MCF 10A (cell line): ENCODE measurements at regions of chr14 and their contacts with region 1.

Region 1: GRCh38 chr14:50003213-50004031 is 110.5 kb downstream of the ARF6 start:
- DNase-seq: peak; percentile 72
- H3K4me3 Mint-ChIP-seq: peak overlapping the region; percentile 73
- H3K27ac Mint-ChIP-seq: peak overlapping the region; percentile 95
- H3K4me1 Mint-ChIP-seq: peaks cover 45% of the 10 kb centered on the region
- H3K27me3 Mint-ChIP-seq: no peaks in the 10 kb centered on the region
- CTCF ChIP-seq: no peak

Region 2: DNA sequence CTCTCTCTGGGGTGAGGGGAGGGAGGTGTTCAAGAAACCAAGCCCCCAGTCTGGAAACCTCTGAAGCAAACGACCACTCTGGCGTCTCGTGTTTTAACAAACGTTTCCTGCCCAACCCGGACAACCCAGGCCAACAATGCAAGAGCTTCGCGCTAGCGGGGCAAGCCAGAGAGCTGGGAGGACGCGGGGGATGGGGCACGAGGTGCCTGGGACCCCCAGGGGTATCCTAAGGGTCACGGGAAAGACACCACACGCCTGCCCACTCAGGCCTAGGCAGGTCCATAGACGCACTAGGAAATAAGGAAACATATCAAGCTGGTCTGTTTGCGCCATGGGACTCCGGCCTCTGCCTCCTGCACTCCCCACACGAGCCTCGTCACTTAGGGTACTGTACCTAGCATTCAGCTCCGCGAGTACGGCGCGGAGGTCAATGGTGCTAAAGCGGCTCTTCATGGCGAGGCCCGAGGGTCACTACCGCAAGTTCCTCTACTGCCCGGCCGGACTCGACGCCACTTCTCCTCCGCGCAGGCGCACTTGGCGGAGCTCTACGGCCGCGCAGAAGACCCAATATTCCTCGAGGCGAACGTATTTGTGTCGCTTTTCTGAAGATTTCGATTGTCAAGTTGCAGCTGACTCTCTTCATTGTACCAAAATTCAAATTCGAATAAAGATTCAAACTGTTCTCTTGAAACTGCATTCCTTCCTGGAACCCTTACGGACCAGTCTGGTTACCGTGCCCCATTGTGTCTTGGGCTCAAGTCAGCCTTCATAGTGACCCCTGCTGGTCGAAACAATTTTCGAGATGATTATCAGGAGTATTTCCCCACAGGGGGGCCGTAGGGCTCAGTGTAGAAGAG is 150.9 kb before region 1 on chr14 and contains the start of gene NEMF:
- CTCF ChIA-PET with region 1: interaction called, 7 read pairs
- POLR2A ChIA-PET with region 1: interaction called, 30 read pairs
- intact Hi-C with region 1: loop called (anchors 5 kb)
- DNase-seq: peak; percentile 92
- H3K4me3 Mint-ChIP-seq: peak within 1 kb of the TSS; percentile 99
- H3K27ac Mint-ChIP-seq: peak within 1 kb of the TSS; percentile 99
- H3K4me1 Mint-ChIP-seq: peaks cover 15% of the 10 kb centered on the region
- H3K27me3 Mint-ChIP-seq: no peaks in the 10 kb centered on the region
- CTCF ChIP-seq: peak; percentile 88
- total RNA-seq, gene NEMF: 55.0 and 57.7 TPM in 2 replicates

Region 3: DNA sequence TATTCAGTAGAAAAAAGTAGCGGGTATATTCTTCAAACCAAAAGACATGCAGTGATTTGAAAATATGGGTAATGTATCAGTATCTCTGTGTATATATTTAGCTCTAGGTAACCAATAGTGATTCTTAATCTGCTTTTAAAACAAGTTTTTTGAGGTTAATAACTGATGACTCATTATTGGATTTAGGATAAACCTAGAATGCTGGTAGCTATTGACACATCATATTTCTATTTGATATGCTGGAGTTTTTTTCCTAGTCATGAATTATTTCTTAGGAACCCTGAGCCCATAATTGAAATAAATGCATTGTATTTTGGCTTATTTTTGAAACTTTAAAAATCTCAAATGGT is 95.0 kb before region 1 on chr14:
- CTCF ChIA-PET with region 1: interaction called, 5 read pairs
- POLR2A ChIA-PET with region 1: interaction called, 12 read pairs
- intact Hi-C with region 1: no loop called
- DNase-seq: no peak
- H3K4me3 Mint-ChIP-seq: peak overlapping the region; percentile 51
- H3K27ac Mint-ChIP-seq: peak overlapping the region; percentile 97
- H3K4me1 Mint-ChIP-seq: peaks cover 25% of the 10 kb centered on the region
- H3K27me3 Mint-ChIP-seq: no peaks in the 10 kb centered on the region
- CTCF ChIP-seq: no peak

Region 4: DNA sequence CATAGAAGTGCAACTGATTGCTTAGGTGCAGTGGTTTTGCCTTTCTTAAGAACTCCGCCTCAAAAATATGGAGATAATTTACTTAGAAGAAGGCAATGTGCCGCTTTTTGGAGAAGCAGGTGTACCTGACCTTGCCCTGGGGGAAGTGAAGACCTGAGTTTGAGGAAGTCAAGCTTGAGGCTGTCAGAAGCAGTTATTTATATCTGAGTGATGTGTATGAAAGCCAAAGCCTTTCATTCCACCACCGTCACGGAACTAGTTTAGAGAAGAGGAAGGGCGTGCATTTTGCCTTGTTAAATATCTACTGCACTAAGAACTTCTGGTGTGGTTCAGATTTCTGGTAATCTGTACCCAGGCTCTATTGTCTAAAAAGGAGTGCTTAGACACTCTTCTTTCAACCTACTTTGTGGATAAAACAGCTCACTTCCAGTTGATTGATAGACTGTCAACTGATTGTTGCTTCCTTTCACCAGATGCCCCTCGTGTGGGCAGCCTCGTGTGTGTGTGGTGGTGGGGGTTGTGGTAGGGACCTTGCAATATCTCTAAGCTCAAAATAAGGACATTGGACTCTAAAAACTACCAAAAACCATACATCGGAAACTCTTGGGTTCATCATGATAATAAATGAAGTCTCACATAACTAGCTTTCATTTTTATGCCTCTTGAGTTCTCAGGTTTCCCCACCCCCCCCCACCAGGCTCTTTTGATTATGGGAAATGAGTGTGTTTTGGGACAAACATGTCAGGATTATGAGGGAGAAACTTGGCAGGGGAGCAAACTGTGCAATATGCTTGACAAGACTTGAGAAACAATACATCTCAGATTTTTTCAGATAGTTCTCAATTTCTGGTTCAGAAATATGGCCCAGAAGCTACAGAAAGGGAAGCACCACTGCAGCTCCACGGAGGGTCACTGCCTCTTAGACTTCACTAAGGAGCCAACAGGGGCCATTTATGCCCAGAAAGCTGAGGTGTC is 32.0 kb before region 1 on chr14:
- CTCF ChIA-PET with region 1: interaction called, 36 read pairs
- POLR2A ChIA-PET with region 1: interaction called, 187 read pairs
- intact Hi-C with region 1: loop called (anchors 1 kb)
- DNase-seq: peak; percentile 80
- H3K4me3 Mint-ChIP-seq: peak overlapping the region; percentile 58
- H3K27ac Mint-ChIP-seq: peak overlapping the region; percentile 89
- H3K4me1 Mint-ChIP-seq: peaks cover 48% of the 10 kb centered on the region
- H3K27me3 Mint-ChIP-seq: no peaks in the 10 kb centered on the region
- CTCF ChIP-seq: no peak

Region 5: DNA sequence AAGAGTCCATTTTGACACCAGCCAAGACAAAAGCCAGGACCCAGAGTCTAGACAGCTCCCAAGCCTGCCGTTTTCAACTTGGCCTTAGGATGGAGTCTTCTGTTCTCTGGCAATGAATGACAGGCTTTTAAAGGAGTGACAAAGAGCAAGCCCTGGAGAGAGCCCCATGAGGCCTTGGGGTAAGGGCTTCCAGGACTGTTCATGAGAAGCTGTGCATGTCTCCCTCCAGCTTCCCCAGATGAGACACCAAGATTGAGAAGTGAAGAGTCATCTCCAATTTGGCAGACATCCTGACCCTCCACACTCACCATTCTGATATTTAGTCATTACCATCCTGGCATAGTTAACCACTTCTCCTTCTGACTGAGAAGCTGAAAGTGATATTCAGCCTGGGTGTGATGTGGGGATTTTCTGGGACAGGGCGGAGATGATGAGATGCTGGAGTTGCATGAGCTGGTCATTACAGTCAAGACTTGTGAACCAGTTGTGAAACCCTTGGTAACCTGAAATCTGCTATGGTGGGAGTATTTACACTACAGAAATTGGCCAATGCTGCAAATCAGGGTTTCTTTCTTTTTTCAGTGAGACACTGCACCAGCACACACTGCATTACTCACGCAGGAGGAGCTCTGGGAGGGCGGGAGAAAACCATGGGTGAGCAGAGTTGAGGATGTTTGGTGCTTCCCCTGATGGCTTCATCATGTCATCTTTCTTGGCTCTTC is 35.1 kb after region 1 on chr14:
- CTCF ChIA-PET with region 1: interaction called, 6 read pairs
- POLR2A ChIA-PET with region 1: interaction called, 95 read pairs
- intact Hi-C with region 1: no loop called
- DNase-seq: peak; percentile 94
- H3K4me3 Mint-ChIP-seq: peak overlapping the region; percentile 40
- H3K27ac Mint-ChIP-seq: peak overlapping the region; percentile 89
- H3K4me1 Mint-ChIP-seq: peaks cover 43% of the 10 kb centered on the region
- H3K27me3 Mint-ChIP-seq: no peaks in the 10 kb centered on the region
- CTCF ChIP-seq: peak; percentile 16

Region 6: GRCh38 chr14:50099335-50099734 is 95.9 kb after region 1 on chr14:
- CTCF ChIA-PET with region 1: interaction called, 5 read pairs
- POLR2A ChIA-PET with region 1: interaction called, 11 read pairs
- intact Hi-C with region 1: loop called (anchors 5 kb)
- DNase-seq: peak; percentile 47
- H3K4me3 Mint-ChIP-seq: no peak overlapping the region
- H3K27ac Mint-ChIP-seq: peak overlapping the region; percentile 33
- H3K4me1 Mint-ChIP-seq: peaks cover 11% of the 10 kb centered on the region
- H3K27me3 Mint-ChIP-seq: no peaks in the 10 kb centered on the region
- CTCF ChIP-seq: no peak